ENCODE measurements at regions of chr13 and their contacts with region 1.

Region 1: DNA sequence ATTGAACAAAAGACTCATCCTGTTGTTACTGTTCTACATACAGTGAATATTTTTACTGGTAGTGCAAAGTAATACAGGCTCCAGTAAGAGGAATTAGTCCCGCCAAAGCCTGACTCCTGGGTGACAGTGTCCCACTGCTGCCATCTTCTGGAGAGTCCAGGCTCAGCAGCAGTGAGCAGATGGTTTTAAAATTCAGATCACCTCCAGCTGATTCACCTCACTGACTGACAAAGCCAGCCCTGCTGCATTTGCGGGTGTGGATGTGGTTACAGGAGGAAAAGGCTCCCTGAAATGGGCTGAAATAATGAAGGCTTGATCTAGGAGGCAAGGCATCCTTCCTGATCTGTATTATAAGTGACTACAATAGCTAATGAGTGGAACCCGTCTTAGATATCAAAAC is 18.3 kb downstream of the PABPC3 start:
- DNase-seq: peak; percentile 77 to 87
- H3K4me3 ChIP-seq: no peak overlapping the region
- H3K27ac ChIP-seq: no peak overlapping the region
- H3K4me1 ChIP-seq: peaks cover 1 to 6% (median 5%) of the 10 kb centered on the region in 4 experiments; a peak in 6 of 7 replicates
- H3K27me3 ChIP-seq: no peaks in the 10 kb centered on the region; a peak in 1 of 7 replicates
- CTCF ChIP-seq: peak; percentile 88 to 95 (median 90)
- EP300 ChIP-seq: no peak
- POLR2A ChIP-seq: no peak
- RAD21 ChIP-seq: peak; percentile 84 to 92

Region 2: DNA sequence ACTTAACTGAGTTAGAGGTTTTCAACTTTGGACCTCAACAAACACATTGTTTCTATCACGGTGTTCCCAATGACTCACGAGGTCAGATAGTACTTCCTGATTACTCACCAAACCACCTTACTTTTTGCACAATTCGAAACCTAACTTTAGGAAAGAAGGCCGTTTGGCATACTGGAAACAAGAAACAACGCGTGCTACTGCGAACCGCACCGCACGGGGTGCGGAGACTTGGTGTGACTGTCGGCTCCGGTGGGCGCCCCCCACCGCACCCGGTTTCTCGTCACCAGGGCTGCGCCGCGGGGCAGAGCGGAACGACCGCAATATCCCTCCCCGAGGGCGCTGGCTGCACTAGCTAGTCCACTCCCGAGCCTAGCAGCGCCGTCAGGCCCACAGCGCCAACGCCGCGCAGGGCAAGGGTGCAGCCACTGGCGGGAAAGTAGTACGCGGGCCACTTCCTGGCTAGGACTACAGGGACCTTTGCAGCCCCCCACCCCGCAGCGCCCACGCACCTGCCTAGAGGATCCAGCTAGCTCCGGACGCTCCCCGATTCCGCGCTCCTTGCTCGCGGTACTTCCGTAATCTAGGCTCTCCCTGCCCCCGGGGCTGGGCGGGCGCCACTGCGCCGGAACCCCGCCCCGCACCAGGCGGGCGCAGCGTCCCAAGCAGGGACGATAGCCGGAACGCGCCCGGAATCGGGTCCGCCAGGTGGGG is 601.9 kb before region 1 on chr13 and contains the start of gene PARP4:
- CTCF ChIA-PET with region 1: no interaction called
- POLR2A ChIA-PET with region 1: no interaction called
- DNase-seq: peak in 1 of 2 experiments; percentile 82
- H3K4me3 ChIP-seq: peak within 1 kb of the TSS; percentile 76 to 93 (median 84)
- H3K27ac ChIP-seq: peak within 1 kb of the TSS; percentile 69; the same call in 1 of the 2 replicates
- H3K4me1 ChIP-seq: peaks cover 0 to 7% (median under 1%) of the 10 kb centered on the region in 4 experiments; a peak in 2 of 7 replicates
- H3K27me3 ChIP-seq: no peaks in the 10 kb centered on the region
- CTCF ChIP-seq: no peak
- EP300 ChIP-seq: no peak
- POLR2A ChIP-seq: peak; percentile 79 to 89
- RAD21 ChIP-seq: no peak
- total RNA-seq, gene PARP4: 36.8 and 40.3 TPM in 2 replicates

Region 3: DNA sequence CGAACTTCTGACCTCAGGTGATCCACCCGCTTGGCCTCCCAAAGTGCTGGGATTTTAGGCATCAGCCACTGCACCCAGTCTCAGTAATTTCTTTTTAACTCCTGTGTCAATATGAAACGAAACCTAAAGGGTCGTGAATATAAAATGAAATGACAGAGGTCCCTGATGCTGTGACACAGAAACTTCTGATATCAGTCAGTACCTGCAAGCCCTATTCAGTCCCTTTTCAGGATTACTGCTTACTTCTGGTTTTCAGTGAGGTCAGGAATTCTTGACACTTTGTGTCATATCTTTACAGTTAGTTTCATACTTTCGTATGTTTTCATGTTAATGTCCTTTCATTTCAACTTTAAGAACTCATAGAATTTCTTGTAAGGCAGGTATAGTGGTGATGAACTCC is 291.6 kb before region 1 on chr13:
- CTCF ChIA-PET with region 1: no interaction called
- POLR2A ChIA-PET with region 1: no interaction called
- DNase-seq: no peak
- H3K4me3 ChIP-seq: no peak overlapping the region
- H3K27ac ChIP-seq: no peak overlapping the region
- H3K4me1 ChIP-seq: no peaks in the 10 kb centered on the region
- H3K27me3 ChIP-seq: no peaks in the 10 kb centered on the region
- CTCF ChIP-seq: no peak
- EP300 ChIP-seq: no peak
- POLR2A ChIP-seq: no peak
- RAD21 ChIP-seq: no peak

Region 4: DNA sequence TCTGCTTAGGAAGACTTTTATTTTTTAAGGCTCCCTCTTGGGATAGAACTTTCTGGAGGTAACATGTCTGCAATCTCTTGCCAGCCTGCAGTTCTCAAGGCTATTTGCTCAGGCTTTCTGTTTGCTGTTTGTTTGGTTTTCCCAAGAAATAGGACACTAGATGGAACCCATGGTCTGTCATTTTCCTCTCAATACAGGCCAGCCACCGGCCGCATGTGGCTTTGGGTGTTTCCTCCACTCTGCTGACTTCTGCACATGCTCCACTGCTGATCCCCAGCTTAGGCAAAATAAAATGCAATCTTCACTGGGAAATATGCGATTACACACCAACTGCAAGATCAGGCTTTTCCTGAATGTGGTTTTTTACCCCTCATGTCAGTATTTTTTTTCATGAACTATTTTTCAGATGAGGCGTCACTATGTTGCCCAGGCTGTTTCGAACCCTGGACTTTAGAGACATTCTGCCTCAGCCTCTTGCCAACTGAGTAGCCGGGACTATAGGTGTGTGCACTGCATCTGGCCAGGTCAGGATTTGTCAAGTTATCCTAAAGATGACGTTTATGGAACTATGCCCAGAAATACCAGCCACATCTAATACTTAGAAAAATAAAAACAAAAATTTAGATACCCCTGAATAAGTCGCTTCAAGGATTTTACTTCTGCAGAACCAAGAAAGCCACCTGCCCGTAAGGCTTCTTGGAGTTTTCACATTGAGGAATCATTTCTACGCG is 112.6 kb before region 1 on chr13:
- CTCF ChIA-PET with region 1: interaction called, 29 read pairs
- POLR2A ChIA-PET with region 1: no interaction called
- DNase-seq: no peak
- H3K4me3 ChIP-seq: no peak overlapping the region
- H3K27ac ChIP-seq: no peak overlapping the region
- H3K4me1 ChIP-seq: no peaks in the 10 kb centered on the region; a peak in 1 of 7 replicates
- H3K27me3 ChIP-seq: no peaks in the 10 kb centered on the region
- CTCF ChIP-seq: no peak
- EP300 ChIP-seq: no peak
- POLR2A ChIP-seq: no peak
- RAD21 ChIP-seq: peak in 1 of 2 experiments; percentile 33; a peak in 1 of 4 replicates

Region 5: GRCh38 chr13:25085125-25085742 is 29.0 kb before region 1 on chr13:
- CTCF ChIA-PET with region 1: interaction called, 44 read pairs
- POLR2A ChIA-PET with region 1: no interaction called
- DNase-seq: no peak
- H3K4me3 ChIP-seq: no peak overlapping the region
- H3K27ac ChIP-seq: no peak overlapping the region
- H3K4me1 ChIP-seq: no peaks in the 10 kb centered on the region
- H3K27me3 ChIP-seq: no peaks in the 10 kb centered on the region
- CTCF ChIP-seq: peak; percentile 29 to 76 (median 67)
- EP300 ChIP-seq: no peak
- POLR2A ChIP-seq: no peak
- RAD21 ChIP-seq: peak; percentile 72 to 80

Region 6: GRCh38 chr13:25095862-25096453 is 18.3 kb before region 1 on chr13 and contains the start of gene PABPC3:
- CTCF ChIA-PET with region 1: interaction called, 23 read pairs
- POLR2A ChIA-PET with region 1: no interaction called
- DNase-seq: no peak
- H3K4me3 ChIP-seq: no peak within 1 kb of the TSS
- H3K27ac ChIP-seq: no peak within 1 kb of the TSS
- H3K4me1 ChIP-seq: no peaks in the 10 kb centered on the region
- H3K27me3 ChIP-seq: no peaks in the 10 kb centered on the region
- CTCF ChIP-seq: no peak
- EP300 ChIP-seq: no peak
- POLR2A ChIP-seq: no peak
- RAD21 ChIP-seq: no peak
- total RNA-seq, gene PABPC3: 0.48 TPM in 2 replicates

Region 7: DNA sequence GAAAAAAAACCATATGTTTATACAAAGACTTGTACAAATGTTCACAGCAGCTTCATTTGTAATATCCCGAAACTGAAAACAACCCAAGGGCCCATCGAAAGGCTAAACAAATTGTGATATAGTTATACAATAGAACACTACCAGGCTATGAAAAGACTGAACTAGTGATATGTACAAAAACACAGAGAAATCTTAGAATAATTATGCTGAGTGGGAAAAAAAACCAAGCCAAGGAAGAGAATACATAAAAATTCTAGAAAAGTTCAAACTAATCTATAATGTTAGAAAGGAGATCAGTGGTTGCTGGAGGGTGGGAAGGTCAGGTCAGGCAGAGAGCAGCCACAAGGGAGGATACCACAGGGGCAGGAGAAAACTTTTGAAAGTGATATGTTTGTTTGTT is 10.5 kb before region 1 on chr13:
- CTCF ChIA-PET with region 1: interaction called, 23 read pairs
- POLR2A ChIA-PET with region 1: no interaction called
- DNase-seq: no peak
- H3K4me3 ChIP-seq: no peak overlapping the region
- H3K27ac ChIP-seq: no peak overlapping the region
- H3K4me1 ChIP-seq: no peaks in the 10 kb centered on the region
- H3K27me3 ChIP-seq: no peaks in the 10 kb centered on the region
- CTCF ChIP-seq: no peak
- EP300 ChIP-seq: no peak
- POLR2A ChIP-seq: no peak
- RAD21 ChIP-seq: no peak

Region 8: GRCh38 chr13:25130944-25131343 is 16.7 kb after region 1 on chr13:
- CTCF ChIA-PET with region 1: interaction called, 16 read pairs
- POLR2A ChIA-PET with region 1: no interaction called
- DNase-seq: no peak
- H3K4me3 ChIP-seq: no peak overlapping the region
- H3K27ac ChIP-seq: no peak overlapping the region
- H3K4me1 ChIP-seq: peaks cover 2 to 17% (median 6%) of the 10 kb centered on the region in 4 experiments; a peak in 6 of 7 replicates
- H3K27me3 ChIP-seq: no peaks in the 10 kb centered on the region
- CTCF ChIP-seq: no peak
- EP300 ChIP-seq: no peak
- POLR2A ChIP-seq: no peak
- RAD21 ChIP-seq: no peak

Measured in H1 (cell line).